Activated naive CD8-positive, alpha-beta T cell treated with anti-CD3 and anti-CD28 coated beads, Interleukin-2, amount 10 ng/mL, durations not matched to agents 7 days and 5 days (primary cell): ENCODE measurements at regions of chr14 and their contacts with region 1.

Region 1: DNA sequence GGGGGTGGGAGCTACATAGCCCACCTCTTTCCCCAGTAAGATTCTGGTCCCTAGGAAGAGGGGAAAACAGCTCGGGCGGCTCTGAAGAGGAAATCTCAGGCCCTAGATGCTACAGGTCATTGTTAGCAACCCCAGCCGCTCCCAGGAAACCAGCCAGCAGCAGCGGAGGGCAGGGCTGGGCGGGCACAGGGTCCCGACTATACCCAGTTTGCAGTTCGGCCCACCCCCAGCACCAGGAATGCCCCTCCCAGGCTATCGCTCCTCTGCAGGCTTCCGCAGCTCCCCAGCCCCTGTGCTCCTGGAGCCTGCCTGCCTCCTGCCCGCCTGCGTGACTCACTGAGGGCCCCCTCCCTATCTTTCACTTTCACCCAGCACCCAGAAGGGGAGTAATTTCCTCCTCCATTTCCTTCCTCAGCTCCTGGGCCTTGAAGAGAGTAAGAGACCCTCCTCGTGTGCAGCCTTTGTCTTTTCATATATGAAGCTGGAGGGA is 27.2 kb upstream of the PNMA1 start:
- DNase-seq: no peak
- ATAC-seq: peak; percentile 71
- H3K4me3 Mint-ChIP-seq: peak overlapping the region; percentile 84
- H3K27ac Mint-ChIP-seq: peak overlapping the region; percentile 94
- H3K4me1 Mint-ChIP-seq: peaks cover 57% of the 10 kb centered on the region
- H3K27me3 Mint-ChIP-seq: no peaks in the 10 kb centered on the region

Region 2: GRCh38 chr14:73623493-73624054 is 117.9 kb before region 1 on chr14:
- POLR2A ChIA-PET with region 1: no interaction called
- DNase-seq: no peak
- ATAC-seq: no peak
- H3K4me3 Mint-ChIP-seq: no peak overlapping the region
- H3K27ac Mint-ChIP-seq: no peak overlapping the region
- H3K4me1 Mint-ChIP-seq: no peaks in the 10 kb centered on the region
- H3K27me3 Mint-ChIP-seq: peaks cover 8% of the 10 kb centered on the region

Region 3: DNA sequence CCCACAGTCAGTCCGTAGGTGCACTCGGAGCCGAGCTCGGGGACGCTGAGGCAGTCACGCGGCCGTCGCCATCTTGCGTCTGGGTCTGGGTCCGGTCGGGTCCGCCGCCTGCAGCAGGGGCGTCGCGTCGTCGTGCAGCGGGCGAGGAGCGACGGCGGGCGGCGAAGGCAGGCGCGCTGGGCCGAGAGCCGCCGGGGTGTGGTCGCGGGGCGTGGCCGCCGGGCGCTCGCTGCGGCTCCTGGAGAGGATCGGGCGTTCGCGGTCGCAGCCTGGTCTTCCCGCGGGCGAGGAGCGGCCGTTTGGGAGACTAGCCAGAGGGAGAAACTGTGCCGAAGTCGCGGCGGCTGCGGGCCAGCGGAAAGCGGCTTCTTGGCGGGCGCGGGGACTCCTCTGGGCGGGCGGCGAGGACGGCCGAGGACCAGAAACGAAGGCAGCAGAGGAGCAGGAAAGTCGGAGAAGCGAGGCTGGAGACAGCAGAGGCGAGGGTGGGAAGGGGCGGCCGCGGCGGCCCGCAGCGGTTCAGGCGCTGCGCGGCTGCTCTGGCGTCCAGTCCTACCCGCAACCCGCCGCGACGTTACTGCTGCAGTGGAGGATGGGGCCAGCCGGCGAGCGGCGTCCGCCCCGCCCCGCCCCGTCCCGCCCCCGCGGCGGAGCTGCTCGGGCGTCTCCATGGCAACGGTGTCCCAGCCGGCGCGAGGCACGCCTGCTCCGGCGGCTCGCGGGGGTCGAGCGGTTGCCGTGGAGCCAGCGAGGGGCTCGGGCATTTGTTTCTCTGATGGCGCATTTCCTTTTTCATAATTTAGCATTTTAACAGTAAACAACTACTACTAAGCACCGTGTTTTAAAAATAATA is 27.4 kb before region 1 on chr14 and contains the start of gene PNMA1:
- POLR2A ChIA-PET with region 1: interaction called, 18 read pairs
- DNase-seq: peak; percentile 92
- ATAC-seq: peak; percentile 79
- H3K4me3 Mint-ChIP-seq: peak within 1 kb of the TSS; percentile 96
- H3K27ac Mint-ChIP-seq: peak within 1 kb of the TSS; percentile 97
- H3K4me1 Mint-ChIP-seq: peaks cover 21% of the 10 kb centered on the region
- H3K27me3 Mint-ChIP-seq: no peaks in the 10 kb centered on the region
- total RNA-seq, gene PNMA1: 32.1 to 34.9 TPM

Region 4: DNA sequence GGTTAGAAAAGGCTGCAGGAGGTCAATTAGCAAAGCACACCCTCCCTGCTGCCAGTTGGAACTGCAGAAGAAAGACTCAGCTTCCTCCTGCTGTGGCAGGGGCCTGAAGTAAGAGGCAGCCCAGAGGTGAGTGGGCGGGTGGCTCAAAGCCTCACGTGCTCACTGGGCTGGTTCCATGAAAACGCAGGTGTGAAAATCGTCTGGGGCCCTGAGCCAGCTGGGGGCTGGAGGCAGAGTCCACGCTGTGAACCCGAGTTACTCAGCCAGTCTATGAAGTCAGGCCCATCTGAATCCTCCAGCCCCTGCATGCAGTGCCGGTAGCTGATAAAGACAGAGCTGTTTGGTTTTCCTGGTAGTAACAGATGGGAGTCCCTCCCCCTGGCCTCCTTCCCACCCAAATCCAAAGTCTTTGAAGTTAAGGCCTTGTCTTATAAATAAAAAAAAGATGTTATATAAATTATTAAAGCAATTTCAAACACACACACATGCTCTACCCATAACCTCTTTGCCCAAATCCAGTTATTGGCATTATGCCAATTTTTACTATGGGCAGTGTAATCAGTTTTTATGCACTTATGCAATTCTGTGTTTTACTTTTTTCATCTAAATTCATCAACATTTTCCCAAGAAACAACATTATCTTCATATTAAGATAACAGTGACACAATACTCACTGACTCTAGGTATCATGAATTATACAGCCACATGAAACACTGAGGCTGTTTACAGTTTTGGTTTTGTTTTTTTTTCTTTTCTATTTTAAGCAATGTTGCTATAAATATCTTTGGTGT is 30.6 kb after region 1 on chr14:
- POLR2A ChIA-PET with region 1: interaction called, 14 read pairs
- DNase-seq: peak; percentile 65
- ATAC-seq: peak; percentile 85
- H3K4me3 Mint-ChIP-seq: peak overlapping the region; percentile 62
- H3K27ac Mint-ChIP-seq: peak overlapping the region; percentile 84
- H3K4me1 Mint-ChIP-seq: peaks cover 50% of the 10 kb centered on the region
- H3K27me3 Mint-ChIP-seq: no peaks in the 10 kb centered on the region

Region 5: DNA sequence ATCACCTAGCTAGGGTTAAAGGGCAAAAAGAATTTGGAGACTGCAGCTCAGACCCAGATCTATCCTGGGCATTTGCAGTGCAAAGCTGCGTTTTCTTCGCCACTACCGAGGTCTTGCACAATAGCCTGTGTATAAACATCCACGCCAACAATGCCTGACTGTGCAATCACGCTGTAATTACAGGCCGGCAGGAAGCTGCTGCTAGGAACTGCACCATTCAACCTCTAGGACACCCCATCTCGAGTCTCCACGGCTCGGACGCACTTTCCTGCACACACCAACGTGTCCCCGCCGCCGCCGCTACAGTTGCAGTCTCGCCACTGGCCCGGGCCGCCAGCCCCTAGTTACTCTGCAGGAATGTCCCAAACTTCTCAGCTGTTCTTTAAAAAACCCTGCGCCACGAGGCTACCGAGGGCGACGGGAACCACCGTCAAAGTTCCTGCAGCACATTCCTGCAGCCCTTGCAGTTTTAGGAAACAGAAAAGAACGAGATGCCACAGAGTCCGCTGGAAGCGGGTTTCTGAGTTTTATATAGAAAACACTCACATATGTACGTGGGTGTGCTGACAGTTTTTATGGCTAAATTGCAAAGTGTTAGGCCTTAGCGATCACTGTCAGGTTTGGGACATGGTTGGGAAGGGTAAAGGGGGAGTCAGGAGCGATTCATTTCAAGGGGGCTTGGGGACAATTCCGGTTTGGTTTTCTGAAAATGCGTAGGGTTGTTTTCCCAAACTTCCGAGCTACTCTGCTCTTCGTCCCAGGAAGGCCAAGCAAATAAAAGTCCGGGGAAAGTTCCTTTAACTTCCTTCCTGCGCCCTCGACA is 44.7 kb after region 1 on chr14:
- POLR2A ChIA-PET with region 1: interaction called, 78 read pairs
- DNase-seq: peak; percentile 76
- ATAC-seq: peak; percentile 68
- H3K4me3 Mint-ChIP-seq: peak overlapping the region; percentile 94
- H3K27ac Mint-ChIP-seq: peak overlapping the region; percentile 93
- H3K4me1 Mint-ChIP-seq: peaks cover 59% of the 10 kb centered on the region
- H3K27me3 Mint-ChIP-seq: no peaks in the 10 kb centered on the region

Region 6: DNA sequence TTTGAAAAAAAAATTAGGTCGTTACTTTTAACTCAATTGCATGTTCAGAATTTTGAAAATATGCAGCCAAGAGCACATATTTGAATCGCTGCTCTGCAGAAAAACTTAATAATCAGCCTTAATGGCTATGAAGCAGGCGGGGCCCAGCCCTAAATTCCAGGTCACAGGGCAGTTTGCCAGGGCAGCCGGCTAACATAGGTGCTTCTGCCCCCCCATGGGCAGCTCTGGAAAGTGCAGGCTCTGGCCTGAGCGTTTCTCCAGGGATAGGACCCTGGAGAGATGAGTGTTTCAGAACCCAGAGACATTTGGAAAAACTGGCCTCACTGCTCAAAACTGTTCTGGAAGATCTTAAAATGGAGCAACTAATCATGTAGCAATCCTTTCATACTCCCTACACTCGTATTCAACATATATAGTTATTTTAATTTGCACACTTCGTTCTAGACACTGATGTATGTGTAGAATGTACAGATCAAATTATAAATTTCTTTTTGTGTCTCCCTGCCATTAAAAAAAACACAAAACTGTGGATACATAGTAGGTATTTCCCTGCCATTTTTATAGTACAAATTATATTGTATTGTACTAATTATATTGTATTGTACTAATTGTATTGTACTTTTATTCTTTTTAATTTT is 84.2 kb after region 1 on chr14:
- POLR2A ChIA-PET with region 1: no interaction called
- DNase-seq: peak; percentile 75
- ATAC-seq: peak; percentile 92
- H3K4me3 Mint-ChIP-seq: no peak overlapping the region
- H3K27ac Mint-ChIP-seq: no peak overlapping the region
- H3K4me1 Mint-ChIP-seq: peaks cover 15% of the 10 kb centered on the region
- H3K27me3 Mint-ChIP-seq: peaks cover 10% of the 10 kb centered on the region